MCF 10A (cell line): ENCODE measurements at regions of chr16 and their contacts with region 1.

Region 1: GRCh38 chr16:68590201-68590994 is 51.3 kb downstream of the ZFP90 start:
- DNase-seq: peak; percentile 79
- H3K4me3 Mint-ChIP-seq: no peak overlapping the region
- H3K27ac Mint-ChIP-seq: no peak overlapping the region
- H3K4me1 Mint-ChIP-seq: peaks cover 6% of the 10 kb centered on the region
- H3K27me3 Mint-ChIP-seq: no peaks in the 10 kb centered on the region
- CTCF ChIP-seq: peak; percentile 98

Region 2: DNA sequence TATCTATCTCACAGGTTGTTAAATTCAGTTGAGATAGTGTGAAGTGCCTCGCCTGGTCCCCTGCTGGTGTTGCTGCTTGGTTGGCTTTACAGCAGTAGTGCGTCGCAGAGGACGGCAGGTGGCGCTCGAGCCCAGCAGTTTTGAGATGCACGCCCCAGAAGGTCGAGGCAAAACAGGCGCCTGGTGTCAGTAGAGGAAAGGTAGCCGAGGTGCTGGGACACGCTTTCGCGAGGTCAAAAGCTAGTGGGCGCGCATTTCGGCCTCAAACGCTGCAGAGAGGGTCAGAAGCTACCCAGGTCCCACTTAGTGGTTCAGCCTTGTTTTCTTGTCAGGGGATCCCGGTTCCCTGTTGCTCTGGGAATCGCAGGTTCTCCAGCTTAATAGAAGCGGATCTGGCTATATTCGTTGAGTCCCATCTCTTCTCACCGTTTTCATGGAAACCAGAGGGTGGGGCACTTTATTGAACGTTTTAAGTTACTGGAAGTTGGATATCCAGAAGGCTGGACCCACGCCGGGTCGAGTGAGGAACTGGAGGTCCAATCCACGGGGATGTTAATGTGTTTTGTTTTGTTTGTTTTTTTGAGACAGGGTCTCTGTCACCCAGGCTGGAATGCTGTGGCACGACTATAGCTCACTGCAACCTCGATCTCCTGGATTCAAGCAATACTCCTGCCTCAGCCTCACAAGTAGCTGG is 61.6 kb before region 1 on chr16:
- CTCF ChIA-PET with region 1: interaction called, 25 read pairs
- POLR2A ChIA-PET with region 1: interaction called, 3 read pairs
- intact Hi-C with region 1: loop called (anchors 2 kb)
- DNase-seq: peak; percentile 89
- H3K4me3 Mint-ChIP-seq: peak overlapping the region; percentile 85
- H3K27ac Mint-ChIP-seq: peak overlapping the region; percentile 85
- H3K4me1 Mint-ChIP-seq: peaks cover 6% of the 10 kb centered on the region
- H3K27me3 Mint-ChIP-seq: no peaks in the 10 kb centered on the region
- CTCF ChIP-seq: peak; percentile 90

Region 3: DNA sequence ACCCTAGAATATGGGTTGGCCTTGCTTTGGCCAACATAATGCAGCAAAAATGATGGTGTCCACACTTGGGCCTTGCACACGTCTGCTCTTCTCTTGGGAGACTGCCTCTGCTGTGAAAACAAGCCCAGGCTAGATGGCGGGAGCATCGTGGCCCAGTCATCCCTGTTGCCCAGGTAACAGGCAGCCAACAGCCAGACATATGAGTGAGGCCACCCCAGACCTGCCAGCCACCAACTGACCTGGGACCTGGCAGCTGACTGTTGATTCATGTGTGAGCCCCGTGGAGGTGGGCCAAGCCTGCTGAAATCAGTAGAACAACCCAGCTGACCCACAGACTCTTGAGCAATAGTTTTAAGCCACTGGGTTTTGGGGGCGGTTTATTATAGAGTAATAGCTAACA is 15.3 kb after region 1 on chr16:
- CTCF ChIA-PET with region 1: interaction called, 10 read pairs
- POLR2A ChIA-PET with region 1: interaction called, 4 read pairs
- intact Hi-C with region 1: no loop called
- DNase-seq: peak; percentile 87
- H3K4me3 Mint-ChIP-seq: no peak overlapping the region
- H3K27ac Mint-ChIP-seq: peak overlapping the region; percentile 18
- H3K4me1 Mint-ChIP-seq: peaks cover 9% of the 10 kb centered on the region
- H3K27me3 Mint-ChIP-seq: no peaks in the 10 kb centered on the region
- CTCF ChIP-seq: no peak

Region 4: GRCh38 chr16:68651136-68651535 is 60.7 kb after region 1 on chr16:
- CTCF ChIA-PET with region 1: interaction called, 15 read pairs
- POLR2A ChIA-PET with region 1: interaction called, 15 read pairs
- intact Hi-C with region 1: loop called (anchors 5 kb)
- DNase-seq: no peak
- H3K4me3 Mint-ChIP-seq: no peak overlapping the region
- H3K27ac Mint-ChIP-seq: no peak overlapping the region
- H3K4me1 Mint-ChIP-seq: peaks cover 9% of the 10 kb centered on the region
- H3K27me3 Mint-ChIP-seq: no peaks in the 10 kb centered on the region
- CTCF ChIP-seq: no peak

Region 5: DNA sequence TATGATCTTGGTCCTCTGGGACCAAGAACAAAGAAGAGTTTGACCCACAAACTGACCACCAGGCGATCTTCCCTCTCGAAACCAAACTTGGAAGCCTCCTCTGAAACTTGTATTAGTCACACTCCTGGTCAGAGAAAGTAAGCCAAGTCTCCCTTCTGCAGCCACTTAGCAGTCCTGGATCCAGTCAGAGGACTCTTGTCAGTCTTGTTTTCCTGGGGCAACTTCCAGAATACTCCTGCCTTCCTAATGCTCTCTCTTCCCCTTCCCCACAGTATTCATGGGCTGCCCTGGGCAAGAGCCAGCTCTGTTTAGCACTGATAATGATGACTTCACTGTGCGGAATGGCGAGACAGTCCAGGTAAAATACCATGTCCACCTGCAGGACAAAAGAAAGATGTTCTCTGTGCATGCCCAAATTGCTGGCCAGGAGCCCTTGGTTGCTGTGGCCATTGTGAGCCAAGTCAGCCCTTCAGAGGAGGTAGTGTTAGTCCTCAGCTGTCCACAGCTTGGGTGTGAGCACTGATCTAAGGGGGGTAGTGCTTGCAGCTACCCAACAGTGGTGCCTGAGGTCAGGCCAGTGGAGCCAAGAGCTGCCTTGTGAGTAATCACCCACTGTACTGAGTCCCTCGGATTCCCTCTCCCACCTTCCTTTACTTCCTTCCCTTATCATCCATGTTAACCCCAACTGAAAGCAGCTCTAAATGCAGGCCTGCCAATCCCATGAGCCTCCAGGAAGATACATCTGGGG is 85.9 kb after region 1 on chr16:
- CTCF ChIA-PET with region 1: interaction called, 60 read pairs
- POLR2A ChIA-PET with region 1: interaction called, 5 read pairs
- intact Hi-C with region 1: no loop called
- DNase-seq: peak; percentile 57
- H3K4me3 Mint-ChIP-seq: no peak overlapping the region
- H3K27ac Mint-ChIP-seq: no peak overlapping the region
- H3K4me1 Mint-ChIP-seq: no peaks in the 10 kb centered on the region
- H3K27me3 Mint-ChIP-seq: no peaks in the 10 kb centered on the region
- CTCF ChIP-seq: no peak

Region 6: GRCh38 chr16:68704232-68704867 is 114.0 kb after region 1 on chr16:
- CTCF ChIA-PET with region 1: interaction called, 22 read pairs
- POLR2A ChIA-PET with region 1: interaction called, 7 read pairs
- intact Hi-C with region 1: loop called (anchors 2 kb)
- DNase-seq: peak; percentile 92
- H3K4me3 Mint-ChIP-seq: no peak overlapping the region
- H3K27ac Mint-ChIP-seq: no peak overlapping the region
- H3K4me1 Mint-ChIP-seq: peaks cover 20% of the 10 kb centered on the region
- H3K27me3 Mint-ChIP-seq: no peaks in the 10 kb centered on the region
- CTCF ChIP-seq: peak; percentile 81

Region 7: GRCh38 chr16:68843482-68844210 is 253.2 kb after region 1 on chr16 and contains the start of gene TANGO6:
- CTCF ChIA-PET with region 1: interaction called, 4 read pairs
- POLR2A ChIA-PET with region 1: interaction called, 4 read pairs
- intact Hi-C with region 1: loop called (anchors 2 kb)
- DNase-seq: peak; percentile 79
- H3K4me3 Mint-ChIP-seq: peak within 1 kb of the TSS; percentile 82
- H3K27ac Mint-ChIP-seq: peak within 1 kb of the TSS; percentile 82
- H3K4me1 Mint-ChIP-seq: peaks cover 10% of the 10 kb centered on the region
- H3K27me3 Mint-ChIP-seq: no peaks in the 10 kb centered on the region
- CTCF ChIP-seq: no peak
- total RNA-seq, gene TANGO6: 14.6 and 21.8 TPM in 2 replicates